IMR-90 (cell line): ENCODE measurements at regions of chr14 and their contacts with region 1.

Region 1: DNA sequence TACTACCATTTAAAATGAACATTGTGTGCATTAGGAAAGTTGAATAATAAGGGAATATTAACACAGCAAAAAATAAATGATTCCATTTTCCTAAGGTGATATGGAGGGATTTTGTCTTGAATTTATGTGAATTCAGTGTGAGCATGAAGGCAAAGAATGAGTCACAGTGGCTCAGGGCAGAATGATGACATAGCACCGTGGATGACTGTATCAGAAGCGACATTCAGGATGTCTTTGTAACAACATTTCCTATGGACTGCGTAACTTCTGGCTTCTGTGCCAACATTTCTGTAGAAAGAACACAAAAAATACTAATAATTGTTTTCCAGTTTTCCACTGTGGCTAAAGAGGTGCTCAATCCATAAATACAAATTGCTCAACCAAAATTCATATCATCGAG is 54.6 kb downstream of the TTC8 start:
- DNase-seq: peak; percentile 96
- ATAC-seq: peak; percentile 76
- H3K4me3 ChIP-seq: no peak overlapping the region
- H3K27ac ChIP-seq: no peak overlapping the region
- H3K4me1 ChIP-seq: no peaks in the 10 kb centered on the region; the same call in 1 of the 2 replicates
- H3K27me3 ChIP-seq: no peaks in the 10 kb centered on the region
- CTCF ChIP-seq: no peak
- POLR2A ChIP-seq: no peak
- RAD21 ChIP-seq: no peak

Region 2: DNA sequence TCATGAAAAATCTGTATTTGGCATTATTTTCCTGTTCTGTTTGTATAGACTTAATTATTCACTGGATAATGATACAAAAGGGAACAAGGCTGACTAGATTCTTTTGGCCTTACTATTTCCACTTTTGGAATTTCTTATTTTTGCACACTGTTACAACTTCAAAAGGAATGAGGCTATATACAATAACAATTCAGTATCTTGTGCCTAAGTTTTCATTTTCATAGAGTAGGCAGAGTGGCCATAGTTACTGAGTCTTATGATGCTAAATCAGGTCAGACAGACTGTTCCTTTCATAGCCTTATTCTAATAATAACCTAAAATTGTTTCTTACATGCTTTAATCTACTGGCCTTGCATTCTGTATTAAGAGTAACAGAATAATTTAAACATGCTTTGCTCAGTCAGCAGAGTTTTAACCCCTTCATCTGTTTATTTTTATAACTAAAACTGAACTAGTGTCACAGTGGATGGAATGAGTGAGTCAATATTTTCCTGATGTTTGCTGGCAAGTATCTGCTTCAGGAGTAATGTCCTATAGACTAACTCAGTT is 44.1 kb before region 1 on chr14:
- CTCF ChIA-PET with region 1: no interaction called
- POLR2A ChIA-PET with region 1: no interaction called
- dilution Hi-C with region 1: no loop called
- in situ Hi-C with region 1: no loop called
- intact Hi-C with region 1: loop called (anchors 2 kb)
- DNase-seq: peak; percentile 87
- ATAC-seq: peak; percentile 80
- H3K4me3 ChIP-seq: no peak overlapping the region
- H3K27ac ChIP-seq: peak overlapping the region; percentile 44; the same call in 1 of the 2 replicates
- H3K4me1 ChIP-seq: peaks cover 23% of the 10 kb centered on the region
- H3K27me3 ChIP-seq: no peaks in the 10 kb centered on the region
- CTCF ChIP-seq: no peak
- POLR2A ChIP-seq: no peak
- RAD21 ChIP-seq: no peak

Region 3: DNA sequence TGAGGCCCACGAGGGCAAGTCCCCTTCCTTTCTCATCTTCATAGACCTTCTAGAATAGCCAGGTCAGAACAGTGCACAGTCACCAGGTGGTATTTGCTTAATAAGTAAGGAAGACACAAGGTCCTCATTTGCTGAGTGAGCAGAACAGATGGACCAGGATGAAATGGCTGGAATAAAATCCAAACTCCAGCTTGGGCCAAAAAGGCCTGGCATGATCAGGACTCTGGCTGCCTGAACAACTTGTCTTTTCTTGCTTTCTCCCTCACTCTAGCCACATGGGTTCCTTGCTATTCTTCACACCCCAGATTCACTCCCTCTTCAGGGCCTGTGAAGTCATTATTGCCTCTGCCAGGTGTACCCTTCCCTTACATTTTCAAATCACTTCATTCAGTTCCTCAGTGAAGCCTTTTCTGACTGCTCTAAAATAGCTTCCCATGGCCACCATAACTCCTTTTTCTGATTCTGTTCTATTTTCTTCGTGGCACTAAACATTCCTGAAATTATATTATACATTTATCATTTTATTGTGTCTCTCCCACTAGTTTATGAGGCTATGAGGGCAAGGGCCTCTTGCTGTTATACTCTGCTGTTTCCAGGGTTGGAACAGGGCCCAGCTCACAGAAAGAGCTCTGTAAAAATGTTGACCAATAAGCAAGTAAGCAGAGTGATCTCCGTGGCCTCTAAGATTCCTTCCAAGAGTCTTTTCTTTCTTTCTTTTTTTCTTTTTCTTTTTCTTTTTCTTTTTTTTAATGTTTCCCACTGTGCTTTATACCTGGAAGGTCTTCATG is 96.2 kb after region 1 on chr14:
- CTCF ChIA-PET with region 1: no interaction called
- POLR2A ChIA-PET with region 1: no interaction called
- dilution Hi-C with region 1: no loop called
- in situ Hi-C with region 1: no loop called
- intact Hi-C with region 1: no loop called
- DNase-seq: no peak
- ATAC-seq: no peak
- H3K4me3 ChIP-seq: no peak overlapping the region
- H3K27ac ChIP-seq: no peak overlapping the region
- H3K4me1 ChIP-seq: no peaks in the 10 kb centered on the region
- H3K27me3 ChIP-seq: peaks cover 11% of the 10 kb centered on the region
- CTCF ChIP-seq: no peak
- POLR2A ChIP-seq: no peak
- RAD21 ChIP-seq: no peak